Mammary epithelial cell (primary cell): ENCODE measurements at regions of chr2 and their contacts with region 1.

Region 1: DNA sequence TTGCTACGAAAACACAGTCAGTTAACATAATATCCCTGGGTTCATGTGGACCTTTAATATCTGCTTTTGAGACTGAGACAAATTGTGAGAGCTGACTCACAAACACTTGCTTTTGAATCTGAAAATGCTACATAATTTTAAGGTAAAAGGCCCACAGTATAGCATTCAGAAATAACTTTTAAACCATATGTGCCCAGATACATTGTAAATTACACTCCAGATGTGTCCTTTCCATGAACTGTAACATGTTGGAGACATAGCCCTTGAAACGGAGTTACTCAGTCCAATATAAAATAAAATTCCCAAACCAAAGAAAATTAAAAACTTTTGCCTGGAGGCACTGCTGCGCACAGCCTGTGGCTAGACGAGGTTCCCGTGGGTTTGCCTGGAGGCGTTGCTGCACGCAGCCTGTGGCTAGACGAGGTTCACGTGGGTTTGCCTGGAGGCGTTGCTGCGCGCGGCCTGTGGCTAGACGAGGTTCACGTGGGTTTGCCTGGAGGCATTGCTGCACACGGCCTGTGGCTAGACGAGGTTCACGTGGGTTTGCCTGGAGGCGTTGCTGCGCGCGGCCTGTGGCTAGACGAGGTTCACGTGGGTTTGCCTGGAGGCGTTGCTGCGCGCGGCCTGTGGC is 131.9 kb upstream of the ALKAL2 start:
- DNase-seq: no peak
- H3K4me3 ChIP-seq: no peak overlapping the region
- H3K27ac ChIP-seq: no peak overlapping the region
- H3K4me1 ChIP-seq: no peaks in the 10 kb centered on the region
- H3K27me3 ChIP-seq: no peaks in the 10 kb centered on the region
- CTCF ChIP-seq: no peak

Region 2: DNA sequence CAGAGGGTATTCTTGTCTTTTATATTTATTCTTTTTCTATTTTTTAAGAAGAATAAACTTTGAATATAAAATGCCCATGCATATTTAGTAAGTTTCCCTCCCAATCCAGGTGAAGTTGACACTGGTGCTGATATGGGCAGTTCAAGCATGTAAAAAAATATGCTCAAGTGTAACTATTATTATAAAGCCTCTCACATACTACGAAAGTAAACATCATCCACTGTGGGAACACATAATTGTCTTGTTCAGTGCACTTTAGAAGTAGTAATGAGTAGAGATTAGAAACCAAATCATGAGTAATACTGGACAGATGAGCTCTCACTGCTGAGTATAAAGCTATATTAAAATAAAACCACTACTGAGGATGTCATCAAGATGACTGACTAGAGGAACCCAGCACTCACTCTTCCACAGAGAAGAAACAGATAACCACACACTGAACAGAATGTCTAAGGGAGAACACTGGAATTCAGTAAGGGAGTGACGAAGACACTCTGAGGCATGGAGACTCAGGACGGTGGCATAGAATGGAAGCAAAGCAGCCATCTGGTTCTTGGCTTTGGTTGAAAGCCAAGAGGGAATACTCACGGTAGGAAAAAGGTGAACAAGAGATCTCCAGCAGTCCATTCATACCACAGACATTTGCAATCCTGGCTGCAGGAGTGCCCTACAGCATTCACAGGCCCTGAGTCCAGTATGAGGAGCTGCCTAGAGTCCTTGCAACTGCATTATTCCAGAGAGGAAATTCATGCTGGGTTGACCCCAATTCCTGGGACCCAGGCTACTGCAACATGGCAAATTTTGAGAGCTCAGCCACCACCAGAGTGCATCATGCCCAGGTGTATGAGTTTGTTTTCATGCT is 364.0 kb before region 1 on chr2:
- CTCF ChIA-PET with region 1: no interaction called
- dilution Hi-C with region 1: no loop called
- in situ Hi-C with region 1: no loop called
- intact Hi-C with region 1: no loop called
- DNase-seq: peak; percentile 53
- H3K4me3 ChIP-seq: no peak overlapping the region
- H3K27ac ChIP-seq: no peak overlapping the region
- H3K4me1 ChIP-seq: peaks cover 3% of the 10 kb centered on the region
- H3K27me3 ChIP-seq: no peaks in the 10 kb centered on the region
- CTCF ChIP-seq: no peak

Region 3: GRCh38 chr2:141611-142010 is 278.2 kb before region 1 on chr2:
- CTCF ChIA-PET with region 1: interaction called, 13 read pairs
- dilution Hi-C with region 1: no loop called
- in situ Hi-C with region 1: no loop called
- intact Hi-C with region 1: no loop called
- DNase-seq: peak; percentile 17
- H3K4me3 ChIP-seq: no peak overlapping the region
- H3K27ac ChIP-seq: no peak overlapping the region
- H3K4me1 ChIP-seq: peaks cover 5% of the 10 kb centered on the region
- H3K27me3 ChIP-seq: no peaks in the 10 kb centered on the region
- CTCF ChIP-seq: no peak

Region 4: GRCh38 chr2:246489-247144 is 173.2 kb before region 1 on chr2:
- CTCF ChIA-PET with region 1: no interaction called
- dilution Hi-C with region 1: no loop called
- in situ Hi-C with region 1: no loop called
- intact Hi-C with region 1: no loop called
- DNase-seq: peak; percentile 33
- H3K4me3 ChIP-seq: no peak overlapping the region
- H3K27ac ChIP-seq: no peak overlapping the region
- H3K4me1 ChIP-seq: no peaks in the 10 kb centered on the region
- H3K27me3 ChIP-seq: no peaks in the 10 kb centered on the region
- CTCF ChIP-seq: peak; percentile 36 to 64